ENCODE measurements at regions of chr18 and their contacts with region 1.

Region 1: GRCh38 chr18:49813319-49814146 is at the start of gene ACAA2:
- DNase-seq: peak; percentile 91 to 96
- ATAC-seq: peak; percentile 97
- H3K4me3 ChIP-seq: peak within 1 kb of the TSS; percentile 38 to 43
- H3K27ac ChIP-seq: peak within 1 kb of the TSS; percentile 58 to 93
- H3K4me1 ChIP-seq: peaks cover 3 to 4% of the 10 kb centered on the region in 2 donors
- H3K27me3 ChIP-seq: no peaks in the 10 kb centered on the region
- total RNA-seq, gene ACAA2: 37.5 to 39.4 TPM

Region 2: GRCh38 chr18:50266248-50266704 is 452.7 kb after region 1 on chr18 and contains the start of gene CFAP53:
- intact Hi-C with region 1: loop called in 1 of 2 experiments (anchors 5 kb)
- DNase-seq: peak; percentile 97 to 98
- ATAC-seq: peak; percentile 97
- H3K4me3 ChIP-seq: peak within 1 kb of the TSS; percentile 59 to 75
- H3K27ac ChIP-seq: no peak within 1 kb of the TSS
- H3K4me1 ChIP-seq: no peaks in the 10 kb centered on the region
- H3K27me3 ChIP-seq: no peaks in the 10 kb centered on the region
- total RNA-seq, gene CFAP53: 0.39 to 0.49 TPM

Measured in aorta (tissue), 5 donors.